ENCODE measurements at regions of chr11 and their contacts with region 1.

Region 1: GRCh38 chr11:12769834-12770345 is 95.7 kb downstream of the TEAD1 start:
- DNase-seq: no peak

Region 2: GRCh38 chr11:12249590-12250260 is 520.2 kb before region 1 on chr11:
- intact Hi-C with region 1: no loop called
- DNase-seq: no peak

Region 3: DNA sequence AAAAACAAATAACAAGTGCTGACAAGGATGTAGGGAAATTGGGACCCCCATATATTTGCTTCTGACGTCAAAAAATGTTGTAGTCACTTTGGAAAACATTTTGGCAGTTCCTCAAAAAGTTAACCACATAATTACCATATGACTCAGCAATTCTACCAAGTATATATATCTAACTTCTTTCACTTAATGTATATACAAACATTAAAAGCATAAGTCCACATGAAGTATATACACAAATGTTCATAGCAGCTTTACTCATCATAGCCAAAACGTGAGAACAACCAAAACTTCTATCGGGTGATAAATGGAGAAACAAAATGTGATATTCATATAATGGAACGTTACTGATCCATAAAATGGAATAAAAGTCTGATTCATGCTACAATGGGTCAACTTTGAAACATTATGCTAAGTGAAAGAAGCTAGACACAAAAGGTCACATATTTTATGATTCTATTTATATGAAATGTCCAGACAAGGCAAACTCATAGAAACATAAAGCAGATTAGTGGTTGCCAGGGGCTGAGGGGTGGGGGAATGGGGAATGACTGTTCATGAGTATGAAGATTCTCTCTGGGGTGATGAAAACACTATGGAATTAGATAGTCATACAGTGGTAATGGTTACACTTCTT is 144.3 kb before region 1 on chr11:
- intact Hi-C with region 1: no loop called
- DNase-seq: no peak

Region 4: GRCh38 chr11:12680246-12680939 is 89.5 kb before region 1 on chr11:
- intact Hi-C with region 1: loop called (anchors 5 kb)
- DNase-seq: peak; percentile 89

Region 5: GRCh38 chr11:12706545-12707499 is 63.1 kb before region 1 on chr11:
- intact Hi-C with region 1: no loop called
- DNase-seq: no peak